ENCODE measurements at regions of chr16 and their contacts with region 1.

Region 1: GRCh38 chr16:57994778-57995177 is 5.7 kb downstream of the ZNF319 start:
- DNase-seq: peak; percentile 66
- ATAC-seq: peak; percentile 35
- H3K4me3 Mint-ChIP-seq: no peak overlapping the region
- H3K27ac Mint-ChIP-seq: no peak overlapping the region
- H3K4me1 Mint-ChIP-seq: peaks cover 38% of the 10 kb centered on the region
- H3K27me3 Mint-ChIP-seq: no peaks in the 10 kb centered on the region

Region 2: DNA sequence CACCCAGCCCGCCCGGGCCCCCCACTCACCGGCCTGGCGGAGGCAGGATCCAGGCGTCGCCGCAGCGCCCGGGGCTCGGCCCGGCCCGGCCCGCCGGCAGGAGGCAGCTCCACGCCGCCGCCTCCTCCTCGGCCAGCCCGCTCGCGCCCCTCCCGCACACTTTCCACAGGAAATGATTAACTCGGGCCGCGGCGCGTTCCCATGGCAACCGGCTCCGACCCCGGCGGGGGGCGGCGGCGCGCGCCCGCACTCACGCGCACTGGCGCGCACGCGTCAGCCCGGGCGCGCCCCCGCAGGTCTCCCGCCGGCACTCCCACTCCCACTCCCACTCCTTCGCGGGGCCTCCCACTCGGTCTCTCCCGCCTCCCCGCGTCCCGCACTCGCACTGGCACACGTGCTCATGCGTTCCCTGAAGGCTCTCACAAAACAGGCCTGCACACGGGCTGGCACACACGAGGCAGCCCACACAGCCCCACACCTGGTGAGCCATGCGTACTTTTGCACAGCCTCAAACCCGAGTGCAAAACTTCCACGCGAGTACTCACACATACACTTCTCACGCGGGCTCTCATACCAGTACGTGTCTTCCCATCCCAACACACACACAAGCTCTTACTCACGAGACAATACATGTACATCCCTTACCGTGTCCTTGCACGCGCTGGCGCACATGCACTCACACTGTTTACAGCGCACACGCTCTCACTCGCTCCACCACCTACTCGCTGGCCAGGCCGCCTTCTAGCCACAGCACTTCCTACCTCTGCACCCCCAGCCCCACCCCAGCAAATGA is 192.2 kb before region 1 on chr16 and contains the start of gene KIFC3:
- CTCF ChIA-PET with region 1: no interaction called
- POLR2A ChIA-PET with region 1: no interaction called
- intact Hi-C with region 1: loop called in 1 of 2 experiments (anchors 10 kb)
- DNase-seq: peak; percentile 86
- ATAC-seq: peak; percentile 83
- H3K4me3 Mint-ChIP-seq: peak within 1 kb of the TSS; percentile 63
- H3K27ac Mint-ChIP-seq: peak within 1 kb of the TSS; percentile 23
- H3K4me1 Mint-ChIP-seq: peaks cover 18% of the 10 kb centered on the region
- H3K27me3 Mint-ChIP-seq: peaks cover 27% of the 10 kb centered on the region
- total RNA-seq, gene KIFC3: 0.32 to 0.66 TPM

Region 3: GRCh38 chr16:58222532-58223316 is 227.9 kb after region 1 on chr16:
- CTCF ChIA-PET with region 1: no interaction called
- POLR2A ChIA-PET with region 1: no interaction called
- intact Hi-C with region 1: no loop called
- DNase-seq: no peak
- ATAC-seq: no peak
- H3K4me3 Mint-ChIP-seq: no peak overlapping the region
- H3K27ac Mint-ChIP-seq: no peak overlapping the region
- H3K4me1 Mint-ChIP-seq: no peaks in the 10 kb centered on the region
- H3K27me3 Mint-ChIP-seq: peaks cover 14% of the 10 kb centered on the region